Caco-2 (cell line): ENCODE measurements at regions of chr9 and their contacts with region 1.

Region 1: DNA sequence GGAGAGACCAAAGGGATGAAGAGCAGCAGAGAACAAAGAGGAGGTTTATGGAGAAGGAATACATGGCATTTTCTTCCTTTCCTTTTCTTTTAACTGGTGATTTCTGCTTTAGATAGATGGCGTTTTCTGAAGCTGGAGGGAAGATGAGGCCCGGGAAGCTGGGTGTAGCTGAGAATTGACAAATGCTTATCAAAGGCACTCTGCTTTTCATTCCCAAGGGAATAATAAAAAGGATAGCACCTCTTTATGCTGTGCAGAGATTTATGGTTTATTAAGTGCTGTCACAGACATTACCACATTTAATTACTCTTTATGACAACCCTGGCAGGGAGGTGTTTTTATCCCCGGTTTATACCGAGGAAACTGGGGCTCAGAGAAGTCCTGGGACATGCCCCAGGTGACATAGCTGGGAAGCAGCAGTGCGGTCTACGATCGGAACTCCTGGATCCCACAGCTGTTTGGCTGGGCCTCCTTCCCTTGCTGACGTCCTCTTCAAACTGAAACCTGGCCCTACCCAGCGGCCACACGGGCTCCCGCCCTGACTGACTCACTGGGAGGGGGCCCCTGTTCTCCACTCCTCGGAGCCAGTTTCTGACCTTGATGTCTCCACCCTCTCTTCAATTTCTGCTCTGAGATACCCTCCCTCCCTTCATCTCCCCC is 8.2 kb upstream of the EPB41L4B start:
- DNase-seq: no peak
- H3K4me3 ChIP-seq: no peak overlapping the region
- H3K4me3 Mint-ChIP-seq: no peak overlapping the region
- H3K27ac Mint-ChIP-seq: peak overlapping the region; percentile 40
- H3K4me1 ChIP-seq: peaks cover 11% of the 10 kb centered on the region
- H3K4me1 Mint-ChIP-seq: peaks cover 25% of the 10 kb centered on the region
- H3K27me3 ChIP-seq: no peaks in the 10 kb centered on the region
- H3K27me3 Mint-ChIP-seq: no peaks in the 10 kb centered on the region
- CTCF ChIP-seq: no peak

Region 2: DNA sequence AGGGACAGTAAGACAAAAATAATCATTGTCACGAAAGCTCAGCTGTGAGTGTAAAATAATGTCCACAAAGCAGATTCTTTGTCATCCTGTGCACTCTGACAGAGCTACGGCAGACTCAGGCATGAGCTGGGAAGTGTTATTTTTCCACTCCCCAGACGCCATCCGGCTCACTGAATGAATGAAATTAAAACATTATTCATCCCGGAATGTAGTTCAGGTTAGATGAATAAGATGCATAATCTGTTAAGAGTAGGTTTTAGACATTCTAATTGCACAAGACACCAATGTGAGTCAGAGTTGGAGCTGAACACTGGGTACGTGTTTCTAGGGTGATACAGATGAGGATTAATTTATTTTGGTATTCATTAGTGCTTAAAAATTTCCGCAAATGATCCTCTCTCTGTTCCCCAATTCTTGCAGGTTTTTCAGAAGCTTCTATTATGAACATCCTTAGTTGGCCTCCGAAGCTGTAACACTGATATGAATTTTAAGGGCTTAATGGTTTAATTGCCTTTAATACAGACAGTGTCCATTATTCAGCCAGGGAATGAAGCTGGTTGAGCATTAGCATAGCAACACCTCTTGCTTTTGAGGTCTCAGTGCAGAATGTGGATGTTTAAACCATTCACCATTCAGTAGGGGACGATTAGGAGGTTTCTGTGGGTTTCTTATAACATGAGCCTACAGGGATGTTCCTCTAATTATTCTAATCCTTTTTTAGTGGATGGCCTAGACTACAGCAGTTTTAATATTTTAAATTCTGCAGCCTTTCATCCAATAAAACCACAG is 96.5 kb before region 1 on chr9:
- CTCF ChIA-PET with region 1: interaction called, 10 read pairs
- POLR2A ChIA-PET with region 1: no interaction called
- intact Hi-C with region 1: no loop called
- DNase-seq: no peak
- H3K4me3 ChIP-seq: no peak overlapping the region
- H3K4me3 Mint-ChIP-seq: no peak overlapping the region
- H3K27ac Mint-ChIP-seq: no peak overlapping the region
- H3K4me1 ChIP-seq: peaks cover 9% of the 10 kb centered on the region; the same call in 1 of the 2 replicates
- H3K4me1 Mint-ChIP-seq: peaks cover 7% of the 10 kb centered on the region
- H3K27me3 ChIP-seq: no peaks in the 10 kb centered on the region
- H3K27me3 Mint-ChIP-seq: no peaks in the 10 kb centered on the region
- CTCF ChIP-seq: no peak

Region 3: GRCh38 chr9:109264877-109265587 is 64.1 kb before region 1 on chr9:
- CTCF ChIA-PET with region 1: no interaction called
- POLR2A ChIA-PET with region 1: no interaction called
- intact Hi-C with region 1: no loop called
- DNase-seq: no peak
- H3K4me3 ChIP-seq: no peak overlapping the region
- H3K4me3 Mint-ChIP-seq: no peak overlapping the region
- H3K27ac Mint-ChIP-seq: no peak overlapping the region
- H3K4me1 ChIP-seq: no peaks in the 10 kb centered on the region
- H3K4me1 Mint-ChIP-seq: no peaks in the 10 kb centered on the region
- H3K27me3 ChIP-seq: no peaks in the 10 kb centered on the region
- H3K27me3 Mint-ChIP-seq: no peaks in the 10 kb centered on the region
- CTCF ChIP-seq: no peak

Region 4: DNA sequence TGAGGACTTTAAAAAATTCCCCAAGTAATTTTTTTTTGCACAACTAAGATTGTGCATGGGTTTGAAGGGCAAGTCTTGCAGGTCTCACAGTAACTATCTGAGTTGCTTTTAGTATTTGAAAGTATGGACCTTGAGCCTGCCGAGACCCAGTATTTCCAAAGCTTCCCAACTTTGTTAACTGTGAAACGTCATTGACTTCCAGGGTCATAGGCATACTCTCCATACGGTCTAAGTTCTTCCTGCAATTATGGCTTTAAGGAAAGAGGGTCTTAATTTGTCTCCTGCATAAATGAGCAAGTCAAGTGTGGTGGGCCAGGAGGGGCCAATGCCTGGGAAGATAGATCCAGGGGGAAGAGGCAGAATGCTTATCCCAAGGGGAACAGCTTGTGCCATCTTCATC is 15.8 kb after region 1 on chr9:
- CTCF ChIA-PET with region 1: interaction called, 12 read pairs
- POLR2A ChIA-PET with region 1: no interaction called
- intact Hi-C with region 1: no loop called
- DNase-seq: no peak
- H3K4me3 ChIP-seq: no peak overlapping the region
- H3K4me3 Mint-ChIP-seq: no peak overlapping the region
- H3K27ac Mint-ChIP-seq: peak overlapping the region; percentile 82
- H3K4me1 ChIP-seq: peaks cover 17% of the 10 kb centered on the region
- H3K4me1 Mint-ChIP-seq: peaks cover 14% of the 10 kb centered on the region
- H3K27me3 ChIP-seq: no peaks in the 10 kb centered on the region
- H3K27me3 Mint-ChIP-seq: no peaks in the 10 kb centered on the region
- CTCF ChIP-seq: no peak

Region 5: GRCh38 chr9:109385499-109385898 is 56.4 kb after region 1 on chr9:
- CTCF ChIA-PET with region 1: no interaction called
- POLR2A ChIA-PET with region 1: interaction called, 10 read pairs
- intact Hi-C with region 1: no loop called
- DNase-seq: no peak
- H3K4me3 ChIP-seq: no peak overlapping the region
- H3K4me3 Mint-ChIP-seq: no peak overlapping the region
- H3K27ac Mint-ChIP-seq: no peak overlapping the region
- H3K4me1 ChIP-seq: no peaks in the 10 kb centered on the region
- H3K4me1 Mint-ChIP-seq: no peaks in the 10 kb centered on the region
- H3K27me3 ChIP-seq: no peaks in the 10 kb centered on the region
- H3K27me3 Mint-ChIP-seq: no peaks in the 10 kb centered on the region
- CTCF ChIP-seq: no peak